Transverse colon (tissue), 4 donors: ENCODE measurements at regions of chr12 and their contacts with region 1.

Region 1: GRCh38 chr12:51270067-51270970 is at the start of gene SMAGP:
- DNase-seq: peak; percentile 89
- H3K4me3 ChIP-seq: peak within 1 kb of the TSS; percentile 55 to 80 (median 66)
- H3K27ac ChIP-seq: peak within 1 kb of the TSS; percentile 89 to 95 (median 92)
- H3K4me1 ChIP-seq: peaks cover 0 to 36% (median 22%) of the 10 kb centered on the region in 4 donors
- H3K27me3 ChIP-seq: peaks cover 4% of the 10 kb centered on the region
- CTCF ChIP-seq: no peak
- EP300 ChIP-seq: peak; percentile 64
- POLR2A ChIP-seq: peak; percentile 73
- total RNA-seq, gene SMAGP: 29.5 to 144 (median 104) TPM

Region 2: DNA sequence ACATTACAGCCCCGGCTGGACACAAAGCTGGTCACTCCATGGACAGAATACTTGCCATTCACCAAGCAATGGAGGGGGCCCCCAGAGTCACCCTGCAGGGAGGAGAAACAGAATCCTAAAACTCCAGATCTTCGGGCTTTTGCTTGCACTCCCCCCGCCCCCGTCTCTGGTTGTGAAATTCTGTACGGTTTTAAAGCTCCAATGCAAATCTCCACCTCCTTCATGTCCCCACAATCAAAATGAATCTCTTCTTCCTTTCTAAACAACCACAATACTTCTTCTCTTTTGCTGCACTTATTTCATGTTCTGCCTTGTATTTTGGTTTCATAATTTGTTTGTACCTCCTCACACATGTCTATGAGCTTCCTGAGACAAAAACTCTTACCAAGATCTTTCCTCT is 59.4 kb after region 1 on chr12:
- in situ Hi-C with region 1: loop called in 1 of 4 experiments (anchors 10 kb)
- intact Hi-C with region 1: no loop called
- DNase-seq: no peak
- H3K4me3 ChIP-seq: no peak overlapping the region
- H3K27ac ChIP-seq: no peak overlapping the region
- H3K4me1 ChIP-seq: peaks cover 0 to 33% (median 10%) of the 10 kb centered on the region in 4 donors
- H3K27me3 ChIP-seq: no peaks in the 10 kb centered on the region
- CTCF ChIP-seq: no peak
- EP300 ChIP-seq: no peak
- POLR2A ChIP-seq: no peak